ENCODE measurements at regions of chr3 and their contacts with region 1.

Region 1: GRCh38 chr3:125437631-125438435 is 62.7 kb upstream of the ZNF148 start:
- DNase-seq: peak in 1 of 2 donors; percentile 62
- ATAC-seq: peak; percentile 32

Region 2: DNA sequence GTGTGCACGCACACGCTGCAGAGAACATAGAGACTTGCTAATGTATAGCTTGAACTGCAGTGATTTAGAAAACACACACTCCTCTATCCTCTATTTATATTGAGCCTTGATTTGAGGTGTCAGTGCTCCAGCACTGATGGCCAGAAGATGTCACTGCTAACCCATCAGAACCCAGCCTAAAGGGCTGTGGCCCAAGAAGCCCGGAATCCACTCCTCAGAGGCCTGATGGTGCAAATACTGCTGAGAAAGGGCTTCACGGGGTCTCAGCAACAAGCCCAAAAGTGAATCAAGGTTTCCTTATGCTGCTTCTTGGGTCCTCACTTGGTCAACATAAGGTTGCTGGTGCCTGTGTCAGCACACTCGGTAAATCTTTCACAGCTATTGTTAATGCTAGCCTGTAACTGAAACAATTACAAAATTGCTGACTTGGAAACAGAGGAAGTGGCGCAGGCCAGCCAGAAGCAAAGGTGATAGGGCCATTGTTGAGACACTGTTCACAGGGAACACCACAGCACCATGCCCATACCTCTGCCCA is 442.3 kb before region 1 on chr3:
- intact Hi-C with region 1: loop called in 1 of 2 experiments (anchors 5 kb)
- DNase-seq: peak; percentile 56 to 61
- ATAC-seq: peak; percentile 84

Region 3: DNA sequence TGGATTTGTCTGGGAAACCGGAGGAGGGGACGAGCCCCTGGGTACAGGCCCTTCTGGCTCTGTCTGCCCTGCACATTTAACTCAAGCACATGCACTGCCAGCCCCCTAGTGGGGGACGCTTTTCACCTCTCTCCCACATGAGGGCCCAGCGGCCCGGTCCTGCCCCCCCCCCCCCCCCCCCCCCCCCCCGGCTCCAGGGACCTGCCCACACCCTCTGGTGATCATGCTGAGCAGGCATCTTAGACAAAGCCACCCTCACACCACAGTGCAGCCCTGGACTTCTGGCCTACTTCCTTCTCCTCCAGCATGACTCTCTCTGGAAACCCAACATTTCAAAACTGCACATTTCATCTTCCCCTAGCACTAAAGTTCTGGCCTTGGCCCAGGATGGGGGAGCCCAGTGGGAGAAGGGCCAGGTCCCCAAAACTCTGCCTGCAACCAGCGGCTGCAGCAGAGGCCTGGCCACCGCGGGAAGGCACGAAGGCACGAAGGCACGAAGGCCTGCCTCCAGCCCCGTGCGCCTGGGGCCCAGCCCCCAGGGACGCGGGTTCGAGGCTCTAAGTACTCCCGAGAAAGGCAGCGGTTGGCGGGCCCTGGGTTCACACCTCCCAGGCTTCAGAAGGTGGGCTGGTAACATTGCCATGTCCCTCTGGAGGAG is 905.3 kb after region 1 on chr3:
- intact Hi-C with region 1: no loop called
- DNase-seq: no peak
- ATAC-seq: no peak